ENCODE measurements at regions of chr12 and their contacts with region 1.

Region 1: GRCh38 chr12:125206711-125207110 is 141.5 kb downstream of the AACS start:
- DNase-seq: no peak
- ATAC-seq: no peak

Region 2: GRCh38 chr12:125245581-125246557 is 39.2 kb after region 1 on chr12:
- intact Hi-C with region 1: loop called (anchors 1 kb)
- DNase-seq: no peak
- ATAC-seq: peak; percentile 43

Measured in sciatic nerve (tissue), 2 donors.